ENCODE measurements at regions of chr9 and their contacts with region 1.

Region 1: GRCh38 chr9:97982683-97983588 is at the start of gene ANP32B:
- DNase-seq: peak; percentile 87 to 97 (median 94)
- ATAC-seq: peak; percentile 83
- H3K4me3 ChIP-seq: peak within 1 kb of the TSS; percentile 75 to 92
- H3K4me3 Mint-ChIP-seq: peak within 1 kb of the TSS; percentile 92
- H3K27ac ChIP-seq: peak within 1 kb of the TSS; percentile 75 to 85
- H3K27ac Mint-ChIP-seq: peak within 1 kb of the TSS; percentile 93
- H3K4me1 ChIP-seq: peaks cover 53% of the 10 kb centered on the region
- H3K4me1 Mint-ChIP-seq: peaks cover 64% of the 10 kb centered on the region
- H3K27me3 ChIP-seq: no peaks in the 10 kb centered on the region
- H3K27me3 Mint-ChIP-seq: no peaks in the 10 kb centered on the region
- CTCF ChIP-seq: peak; percentile 94
- total RNA-seq, gene ANP32B: 168 to 177 TPM

Region 2: DNA sequence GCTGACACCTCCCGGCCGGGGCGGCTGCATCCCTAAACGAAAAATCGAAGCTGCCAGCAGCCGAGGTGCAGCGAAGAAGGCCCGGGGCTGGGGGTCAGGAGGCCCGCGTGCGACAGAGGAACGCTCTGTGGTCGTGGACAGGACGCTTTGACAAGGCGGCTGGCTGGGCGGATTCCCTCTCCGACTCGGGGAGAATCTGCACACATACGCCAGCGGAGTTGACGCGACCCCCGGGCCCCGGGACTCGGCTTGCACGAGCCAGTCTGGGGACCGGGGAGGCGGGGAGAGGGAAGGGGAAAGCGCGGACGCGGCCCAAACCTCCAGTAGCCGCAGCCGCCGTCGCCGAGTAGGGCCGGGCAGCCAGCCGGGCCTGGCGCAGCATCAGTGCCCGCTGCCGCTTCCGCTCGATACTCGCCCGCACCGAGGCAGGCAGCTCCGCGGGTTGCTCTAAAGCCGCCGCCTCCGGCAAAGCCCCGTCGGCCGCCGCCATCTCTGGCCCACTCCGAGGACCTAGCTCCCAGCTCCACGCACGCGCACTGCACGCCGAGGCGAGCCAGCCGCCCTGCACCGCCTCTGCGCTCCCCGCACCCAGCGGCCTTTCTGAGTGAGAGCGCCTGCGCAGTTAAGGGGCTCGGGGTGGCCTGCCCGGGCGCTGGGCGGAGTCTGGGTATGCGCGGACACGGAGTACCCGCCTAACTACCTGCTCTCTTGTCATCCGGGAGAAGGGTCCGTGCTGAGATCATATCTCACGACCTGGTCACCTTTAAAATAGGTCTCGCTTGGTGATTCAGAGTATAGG is 285.9 kb before region 1 on chr9 and contains the start of gene XPA:
- CTCF ChIA-PET with region 1: no interaction called
- POLR2A ChIA-PET with region 1: interaction called, 3 read pairs
- intact Hi-C with region 1: loop called in 1 of 2 experiments (anchors 1 kb)
- DNase-seq: peak; percentile 90 to 99 (median 97)
- ATAC-seq: peak; percentile 94
- H3K4me3 ChIP-seq: peak within 1 kb of the TSS; percentile 68 to 79
- H3K4me3 Mint-ChIP-seq: peak within 1 kb of the TSS; percentile 83
- H3K27ac ChIP-seq: peak within 1 kb of the TSS; percentile 60 to 79
- H3K27ac Mint-ChIP-seq: peak within 1 kb of the TSS; percentile 92
- H3K4me1 ChIP-seq: peaks cover 39% of the 10 kb centered on the region
- H3K4me1 Mint-ChIP-seq: peaks cover 53% of the 10 kb centered on the region
- H3K27me3 ChIP-seq: no peaks in the 10 kb centered on the region
- H3K27me3 Mint-ChIP-seq: peaks cover 4% of the 10 kb centered on the region
- CTCF ChIP-seq: no peak
- total RNA-seq, gene XPA: 21.1 to 24.9 TPM

Region 3: DNA sequence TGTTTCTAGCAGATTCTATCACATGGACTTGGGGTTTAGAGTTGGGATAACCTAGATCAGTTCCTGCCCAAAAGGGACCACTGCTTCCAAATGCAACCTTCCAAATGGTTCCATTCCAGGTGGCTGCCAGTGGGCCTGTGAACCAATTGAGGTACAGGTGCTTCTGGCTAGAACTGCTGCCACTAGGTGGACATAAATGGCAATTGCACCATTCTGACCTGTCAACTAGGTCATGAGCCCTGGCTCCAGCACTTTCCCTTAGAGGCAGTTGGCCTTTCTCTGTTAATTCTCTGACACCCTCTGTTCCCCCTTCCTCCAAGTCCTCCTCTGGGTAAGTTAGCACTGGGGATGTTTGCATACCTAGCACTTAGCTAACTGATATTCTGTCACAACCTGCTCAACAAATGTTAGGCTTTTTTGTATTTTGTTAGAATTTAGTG is 28.4 kb before region 1 on chr9:
- CTCF ChIA-PET with region 1: interaction called, 9 read pairs
- POLR2A ChIA-PET with region 1: interaction called, 4 read pairs
- intact Hi-C with region 1: loop called in 1 of 2 experiments (anchors 2 kb)
- DNase-seq: peak; percentile 14 to 82 (median 59)
- ATAC-seq: peak; percentile 96
- H3K4me3 ChIP-seq: no peak overlapping the region
- H3K4me3 Mint-ChIP-seq: no peak overlapping the region
- H3K27ac ChIP-seq: no peak overlapping the region
- H3K27ac Mint-ChIP-seq: no peak overlapping the region
- H3K4me1 ChIP-seq: no peaks in the 10 kb centered on the region
- H3K4me1 Mint-ChIP-seq: peaks cover 6% of the 10 kb centered on the region
- H3K27me3 ChIP-seq: no peaks in the 10 kb centered on the region
- H3K27me3 Mint-ChIP-seq: no peaks in the 10 kb centered on the region
- CTCF ChIP-seq: peak; percentile 73

Region 4: GRCh38 chr9:98034593-98035546 is 51.9 kb after region 1 on chr9:
- CTCF ChIA-PET with region 1: interaction called, 18 read pairs
- POLR2A ChIA-PET with region 1: interaction called, 3 read pairs
- intact Hi-C with region 1: loop called (anchors 1 to 2 kb)
- DNase-seq: peak; percentile 77 to 97 (median 91)
- ATAC-seq: peak; percentile 99
- H3K4me3 ChIP-seq: no peak overlapping the region
- H3K4me3 Mint-ChIP-seq: no peak overlapping the region
- H3K27ac ChIP-seq: no peak overlapping the region
- H3K27ac Mint-ChIP-seq: no peak overlapping the region
- H3K4me1 ChIP-seq: no peaks in the 10 kb centered on the region
- H3K4me1 Mint-ChIP-seq: peaks cover 6% of the 10 kb centered on the region
- H3K27me3 ChIP-seq: no peaks in the 10 kb centered on the region
- H3K27me3 Mint-ChIP-seq: no peaks in the 10 kb centered on the region
- CTCF ChIP-seq: peak; percentile 80

Region 5: DNA sequence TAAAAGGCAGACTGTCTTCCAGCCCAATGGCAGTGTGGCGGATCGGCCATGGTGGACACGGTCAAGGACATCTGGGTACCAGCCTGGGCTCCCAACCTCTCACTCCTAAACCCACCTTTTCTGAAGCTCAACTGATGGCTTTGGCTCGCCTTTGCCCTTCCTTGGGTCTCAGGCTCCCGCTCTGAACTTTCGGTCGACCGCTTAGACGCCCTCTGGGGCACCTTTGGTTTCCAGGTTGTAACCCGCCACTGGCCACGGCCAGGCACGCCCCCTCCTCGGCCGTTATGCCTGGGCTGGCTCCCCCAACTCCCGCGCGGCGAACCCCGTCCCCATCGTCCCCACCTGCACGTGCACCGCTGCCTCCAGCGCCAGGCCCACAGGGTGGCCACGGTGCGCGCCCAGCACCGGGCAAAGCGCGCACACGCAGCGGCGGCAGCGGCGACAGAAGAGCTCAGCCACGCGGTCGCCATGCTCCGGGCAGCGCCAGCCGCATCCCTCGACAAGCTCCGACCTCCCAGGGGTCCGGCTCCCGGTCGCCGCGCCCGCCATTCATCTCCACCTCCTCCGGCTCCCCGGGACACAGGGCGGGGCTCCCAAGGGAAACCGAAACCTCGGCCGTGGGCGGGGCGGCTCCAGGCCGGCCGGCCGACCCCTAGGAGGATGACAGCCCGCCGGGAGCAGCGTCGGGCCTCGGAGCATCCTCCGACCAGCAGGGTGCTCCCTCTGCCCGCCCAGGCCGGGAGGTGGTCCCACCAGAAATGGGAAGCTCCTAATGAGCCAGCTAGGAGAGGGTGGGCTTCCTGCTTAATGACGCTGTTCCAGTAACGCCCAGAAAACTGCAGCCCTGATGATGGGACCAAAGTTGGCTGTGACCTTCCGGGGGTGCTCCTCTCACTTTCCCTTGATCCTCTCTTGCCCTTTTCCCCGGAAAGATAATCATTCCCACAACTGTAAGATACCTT is 136.0 kb after region 1 on chr9 and contains the start of gene TRIM14:
- CTCF ChIA-PET with region 1: no interaction called
- POLR2A ChIA-PET with region 1: interaction called, 5 read pairs
- intact Hi-C with region 1: loop called in 1 of 2 experiments (anchors 5 kb)
- DNase-seq: peak in 8 of 9 experiments; percentile 31 to 77 (median 60)
- ATAC-seq: peak; percentile 51
- H3K4me3 ChIP-seq: peak within 1 kb of the TSS; percentile 56 to 72
- H3K4me3 Mint-ChIP-seq: peak within 1 kb of the TSS; percentile 86
- H3K27ac ChIP-seq: peak within 1 kb of the TSS; percentile 71 to 92
- H3K27ac Mint-ChIP-seq: peak within 1 kb of the TSS; percentile 97
- H3K4me1 ChIP-seq: peaks cover 48% of the 10 kb centered on the region
- H3K4me1 Mint-ChIP-seq: peaks cover 54% of the 10 kb centered on the region
- H3K27me3 ChIP-seq: no peaks in the 10 kb centered on the region
- H3K27me3 Mint-ChIP-seq: no peaks in the 10 kb centered on the region
- CTCF ChIP-seq: no peak
- total RNA-seq, gene TRIM14: 22.6 to 23.5 TPM